ENCODE measurements at regions of chr7 and their contacts with region 1.

Region 1: GRCh38 chr7:150685219-150686029 is at the start of gene GIMAP2:
- H3K4me3 Mint-ChIP-seq: peak within 1 kb of the TSS; percentile 92
- H3K27ac Mint-ChIP-seq: peak within 1 kb of the TSS; percentile 93
- H3K4me1 Mint-ChIP-seq: peaks cover 60% of the 10 kb centered on the region
- H3K27me3 Mint-ChIP-seq: no peaks in the 10 kb centered on the region

Region 2: DNA sequence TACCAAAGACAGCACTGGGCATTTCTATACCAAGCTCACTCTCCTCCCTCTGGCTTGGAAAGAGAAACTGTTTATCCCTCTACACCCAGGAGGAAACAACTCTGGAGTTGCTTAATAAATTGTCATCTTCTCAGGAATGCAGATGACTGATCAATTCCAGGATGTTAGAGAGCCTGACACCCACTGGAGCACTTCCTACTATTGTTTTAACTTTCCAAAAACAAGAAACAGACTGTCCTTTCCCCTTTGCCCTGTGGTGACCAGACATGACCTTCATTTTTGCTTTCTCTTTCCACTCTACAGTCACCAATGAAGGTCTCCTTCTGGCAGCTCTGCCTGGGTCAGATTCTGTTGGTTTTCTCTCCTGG is 98.7 kb before region 1 on chr7:
- intact Hi-C with region 1: loop called (anchors 2 kb)
- H3K4me3 Mint-ChIP-seq: peak overlapping the region; percentile 62
- H3K27ac Mint-ChIP-seq: peak overlapping the region; percentile 78
- H3K4me1 Mint-ChIP-seq: peaks cover 27% of the 10 kb centered on the region
- H3K27me3 Mint-ChIP-seq: no peaks in the 10 kb centered on the region